Activated CD4-positive, alpha-beta T cell treated with anti-CD3 and anti-CD28 coated beads for 36 hours (primary cell): ENCODE measurements at regions of chr3 and their contacts with region 1.

Region 1: GRCh38 chr3:23916886-23917678 is at the starts of genes NKIRAS1 and RPL15:
- DNase-seq: peak; percentile 98
- ATAC-seq: peak; percentile 94
- H3K4me3 Mint-ChIP-seq: peak within 1 kb of the TSS; percentile 99
- H3K27ac Mint-ChIP-seq: peak within 1 kb of the TSS; percentile 99
- H3K4me1 Mint-ChIP-seq: peaks cover 43% of the 10 kb centered on the region
- H3K27me3 Mint-ChIP-seq: peaks cover 4% of the 10 kb centered on the region
- total RNA-seq, gene NKIRAS1: 2.8 to 3.5 TPM
- total RNA-seq, gene RPL15: 2,605 to 3,065 TPM

Region 2: DNA sequence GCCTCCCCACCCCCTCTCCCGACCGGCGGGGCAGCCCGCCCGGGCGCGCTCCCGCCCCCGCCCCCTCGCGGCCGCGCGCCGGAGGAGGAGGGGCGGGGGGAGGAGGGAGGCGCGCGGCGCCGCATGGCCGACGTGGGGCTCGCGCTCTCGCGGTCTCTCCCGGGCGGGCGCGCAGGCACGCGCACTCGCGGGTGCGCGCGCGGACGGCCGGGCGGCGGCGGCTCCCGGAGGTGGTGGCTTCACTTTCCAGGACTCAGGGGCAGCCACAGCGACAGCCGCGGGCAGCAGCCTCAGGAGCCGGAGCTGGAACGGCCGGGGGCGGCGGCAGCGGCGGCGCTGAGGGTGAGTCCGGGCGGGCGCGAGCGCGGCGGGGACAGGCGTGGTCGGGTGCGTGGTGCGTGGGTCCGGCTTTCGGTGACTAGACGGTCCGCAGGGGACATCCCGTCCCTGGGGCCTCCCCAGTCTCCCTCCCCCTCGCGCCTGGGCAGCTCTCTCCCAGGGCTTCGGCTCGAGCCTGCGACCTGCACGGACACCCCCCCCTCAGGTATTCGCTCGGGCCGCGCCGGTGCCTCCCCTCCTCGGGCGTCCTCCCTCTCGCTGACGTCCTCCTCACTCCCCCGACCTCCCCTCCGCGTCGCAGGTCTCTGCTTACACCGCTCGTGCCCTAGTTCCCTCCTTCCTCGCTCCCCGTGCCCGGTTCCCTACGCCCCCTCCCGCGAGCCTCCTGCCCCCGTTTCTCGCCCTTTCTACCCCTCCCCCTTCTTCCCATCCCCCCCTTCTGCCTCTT is 714.0 kb before region 1 on chr3 and contains the start of gene UBE2E2:
- CTCF ChIA-PET with region 1: no interaction called
- POLR2A ChIA-PET with region 1: no interaction called
- intact Hi-C with region 1: loop called in 1 of 2 experiments (anchors 2 kb)
- DNase-seq: peak; percentile 78
- ATAC-seq: peak; percentile 62
- H3K4me3 Mint-ChIP-seq: peak within 1 kb of the TSS; percentile 83
- H3K27ac Mint-ChIP-seq: peak within 1 kb of the TSS; percentile 76
- H3K4me1 Mint-ChIP-seq: peaks cover 23% of the 10 kb centered on the region
- H3K27me3 Mint-ChIP-seq: peaks cover 11% of the 10 kb centered on the region
- total RNA-seq, gene UBE2E2: 13.5 to 18.2 TPM

Region 3: GRCh38 chr3:23805633-23806533 is 111.2 kb before region 1 on chr3 and contains the start of gene UBE2E1:
- CTCF ChIA-PET with region 1: interaction called, 3 read pairs
- POLR2A ChIA-PET with region 1: interaction called, 7 read pairs
- intact Hi-C with region 1: loop called (anchors 1 to 5 kb)
- DNase-seq: peak; percentile 77
- ATAC-seq: peak; percentile 69
- H3K4me3 Mint-ChIP-seq: peak within 1 kb of the TSS; percentile 91
- H3K27ac Mint-ChIP-seq: peak within 1 kb of the TSS; percentile 89
- H3K4me1 Mint-ChIP-seq: peaks cover 36% of the 10 kb centered on the region
- H3K27me3 Mint-ChIP-seq: peaks cover 8% of the 10 kb centered on the region
- total RNA-seq, gene UBE2E1: 86.3 to 93.8 TPM

Region 4: DNA sequence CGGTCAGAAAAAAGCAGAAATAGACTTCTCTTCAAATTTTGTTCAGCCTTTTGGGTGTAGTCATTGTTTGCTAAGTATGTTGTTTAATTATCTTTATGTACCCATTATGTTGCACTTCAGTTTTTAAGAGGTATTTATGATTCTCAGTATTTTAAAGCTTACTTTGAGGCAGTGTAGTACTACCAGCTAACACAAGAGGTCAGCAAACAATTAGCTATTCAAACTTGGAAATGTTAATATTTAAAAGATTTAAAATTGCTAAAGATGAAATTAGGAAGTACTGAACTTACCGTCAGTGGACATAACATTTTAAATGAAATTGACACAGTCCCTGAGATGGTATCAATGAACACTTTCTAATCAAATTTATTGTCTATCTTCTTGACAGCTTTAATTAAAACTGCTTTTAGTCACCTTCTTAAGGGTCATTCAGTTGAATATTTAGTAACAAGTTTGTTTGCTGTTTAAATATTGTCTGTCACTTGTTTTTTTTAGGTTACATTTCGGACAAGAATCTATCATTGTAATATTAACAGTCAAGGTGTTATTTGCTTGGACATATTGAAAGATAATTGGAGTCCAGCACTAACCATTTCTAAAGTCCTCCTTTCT is 28.4 kb before region 1 on chr3:
- CTCF ChIA-PET with region 1: interaction called, 26 read pairs
- POLR2A ChIA-PET with region 1: interaction called, 3 read pairs
- intact Hi-C with region 1: no loop called
- DNase-seq: no peak
- ATAC-seq: no peak
- H3K4me3 Mint-ChIP-seq: no peak overlapping the region
- H3K27ac Mint-ChIP-seq: no peak overlapping the region
- H3K4me1 Mint-ChIP-seq: no peaks in the 10 kb centered on the region
- H3K27me3 Mint-ChIP-seq: no peaks in the 10 kb centered on the region

Region 5: GRCh38 chr3:23959135-23959900 is 42.2 kb after region 1 on chr3:
- CTCF ChIA-PET with region 1: no interaction called
- POLR2A ChIA-PET with region 1: no interaction called
- intact Hi-C with region 1: loop called in 1 of 2 experiments (anchors 5 kb)
- DNase-seq: peak; percentile 44
- ATAC-seq: peak; percentile 92
- H3K4me3 Mint-ChIP-seq: no peak overlapping the region
- H3K27ac Mint-ChIP-seq: peak overlapping the region; percentile 62
- H3K4me1 Mint-ChIP-seq: peaks cover 34% of the 10 kb centered on the region
- H3K27me3 Mint-ChIP-seq: no peaks in the 10 kb centered on the region

Region 6: DNA sequence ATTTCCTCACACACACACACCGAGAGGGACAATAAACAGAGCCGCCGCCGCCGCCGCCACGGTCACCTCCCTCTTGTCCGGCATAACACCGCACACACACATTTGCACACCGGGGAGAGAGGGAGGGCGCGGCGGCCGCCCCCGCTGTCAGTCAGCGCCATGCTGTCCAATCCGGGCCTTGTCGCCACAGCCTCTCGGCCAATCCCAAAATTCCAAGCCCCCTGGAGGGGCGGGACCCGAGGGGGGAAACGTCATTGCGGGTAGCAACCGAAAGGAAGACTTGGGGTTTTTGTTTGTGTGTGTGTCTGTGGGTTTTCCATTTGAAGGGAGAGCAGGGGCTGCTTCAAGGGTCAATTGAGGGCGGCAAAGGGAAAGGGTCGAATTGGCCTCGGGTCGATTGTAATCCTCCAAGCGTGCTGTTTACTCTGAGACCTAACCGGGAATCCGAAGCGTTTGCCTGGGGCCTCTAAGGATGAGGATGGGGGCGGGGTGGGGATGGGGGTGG is 1747.8 kb after region 1 on chr3 and contains the start of gene TOP2B:
- CTCF ChIA-PET with region 1: no interaction called
- POLR2A ChIA-PET with region 1: no interaction called
- intact Hi-C with region 1: loop called in 1 of 2 experiments (anchors 10 kb)
- DNase-seq: peak; percentile 96
- ATAC-seq: peak; percentile 93
- H3K4me3 Mint-ChIP-seq: peak within 1 kb of the TSS; percentile 83
- H3K27ac Mint-ChIP-seq: peak within 1 kb of the TSS; percentile 100
- H3K4me1 Mint-ChIP-seq: peaks cover 44% of the 10 kb centered on the region
- H3K27me3 Mint-ChIP-seq: no peaks in the 10 kb centered on the region
- total RNA-seq, gene TOP2B: 132 to 156 TPM

Region 7: GRCh38 chr3:25782938-25783660 is 1866.0 kb after region 1 on chr3 and contains the start of gene NGLY1:
- CTCF ChIA-PET with region 1: no interaction called
- POLR2A ChIA-PET with region 1: no interaction called
- intact Hi-C with region 1: loop called in 1 of 2 experiments (anchors 2 kb)
- DNase-seq: peak; percentile 92
- ATAC-seq: peak; percentile 93
- H3K4me3 Mint-ChIP-seq: peak within 1 kb of the TSS; percentile 92
- H3K27ac Mint-ChIP-seq: peak within 1 kb of the TSS; percentile 90
- H3K4me1 Mint-ChIP-seq: peaks cover 54% of the 10 kb centered on the region
- H3K27me3 Mint-ChIP-seq: no peaks in the 10 kb centered on the region
- total RNA-seq, gene NGLY1: 86.1 to 135 TPM